ENCODE measurements at regions of chr20 and their contacts with region 1.

Region 1: DNA sequence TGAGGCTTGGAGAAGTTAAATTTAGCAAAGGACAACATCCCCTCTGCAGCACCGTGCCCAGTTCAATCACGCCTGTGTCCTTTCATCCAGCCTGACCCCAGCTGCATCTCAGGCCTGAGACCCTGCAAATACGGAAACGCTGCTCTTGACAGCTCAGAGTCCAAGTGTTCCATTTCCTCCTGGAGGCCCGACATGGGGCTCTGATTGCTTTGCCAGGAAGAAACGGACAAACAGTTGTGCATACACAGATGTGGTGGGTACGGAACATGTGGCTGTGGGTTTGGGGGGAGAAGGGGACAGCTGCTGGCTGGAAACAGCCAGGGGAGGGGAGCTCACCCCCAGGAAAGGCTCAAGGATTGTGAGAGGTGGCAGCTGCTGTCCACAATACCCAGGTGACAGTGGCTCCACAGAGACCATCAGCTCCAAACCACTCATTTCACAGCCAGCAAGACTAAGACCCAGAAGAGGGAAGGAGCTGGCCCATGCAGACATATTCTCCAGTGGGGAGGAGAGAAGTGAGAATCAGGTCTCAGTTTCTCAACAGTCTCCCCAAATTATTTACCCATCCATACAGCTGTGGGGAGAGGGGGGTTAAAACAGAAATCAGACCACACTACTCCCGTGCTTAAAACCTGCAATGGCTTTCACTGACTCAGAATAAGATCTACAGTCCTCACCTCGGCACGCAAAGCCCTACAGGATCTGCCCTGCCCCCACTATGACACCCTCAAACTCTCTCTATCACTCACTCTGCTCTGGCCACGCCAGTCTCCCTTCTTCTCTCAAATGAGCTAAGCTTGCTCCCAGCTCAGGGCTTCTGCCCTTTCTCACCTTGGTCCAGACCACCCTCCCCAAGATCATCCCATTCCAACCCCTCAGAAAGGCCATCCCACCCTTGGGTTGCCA is 89.1 kb downstream of the PREX1 start:
- DNase-seq: peak; percentile 63 to 64
- ATAC-seq: peak; percentile 81 to 86 (median 85)
- H3K4me3 ChIP-seq: no peak overlapping the region
- H3K4me3 Mint-ChIP-seq: peak overlapping the region; percentile 83
- H3K27ac ChIP-seq: peak overlapping the region; percentile 13
- H3K27ac Mint-ChIP-seq: peak overlapping the region; percentile 89 to 91
- H3K4me1 ChIP-seq: peaks cover 61% of the 10 kb centered on the region
- H3K4me1 Mint-ChIP-seq: peaks cover 69 to 73% of the 10 kb centered on the region in 2 donors
- H3K27me3 ChIP-seq: no peaks in the 10 kb centered on the region
- H3K27me3 Mint-ChIP-seq: no peaks in the 10 kb centered on the region
- CTCF ChIP-seq: no peak

Region 2: GRCh38 chr20:48760403-48760983 is 21.8 kb after region 1 on chr20:
- intact Hi-C with region 1: loop called (anchors 2 kb)
- DNase-seq: peak; percentile 65 to 89
- ATAC-seq: peak; percentile 61 to 83 (median 74)
- H3K4me3 ChIP-seq: peak overlapping the region; percentile 17
- H3K4me3 Mint-ChIP-seq: peak overlapping the region; percentile 86
- H3K27ac ChIP-seq: peak overlapping the region; percentile 87
- H3K27ac Mint-ChIP-seq: no peak overlapping the region
- H3K4me1 ChIP-seq: peaks cover 95% of the 10 kb centered on the region
- H3K4me1 Mint-ChIP-seq: peaks cover 97 to 100% of the 10 kb centered on the region in 2 donors
- H3K27me3 ChIP-seq: no peaks in the 10 kb centered on the region
- H3K27me3 Mint-ChIP-seq: no peaks in the 10 kb centered on the region
- CTCF ChIP-seq: no peak

Region 3: GRCh38 chr20:48769069-48769879 is 30.6 kb after region 1 on chr20:
- intact Hi-C with region 1: loop called (anchors 1 kb)
- DNase-seq: peak; percentile 84 to 94
- ATAC-seq: peak; percentile 80 to 93 (median 88)
- H3K4me3 ChIP-seq: no peak overlapping the region
- H3K4me3 Mint-ChIP-seq: peak overlapping the region; percentile 55
- H3K27ac ChIP-seq: peak overlapping the region; percentile 86
- H3K27ac Mint-ChIP-seq: no peak overlapping the region
- H3K4me1 ChIP-seq: peaks cover 97% of the 10 kb centered on the region
- H3K4me1 Mint-ChIP-seq: peaks cover 92 to 93% of the 10 kb centered on the region in 2 donors
- H3K27me3 ChIP-seq: no peaks in the 10 kb centered on the region
- H3K27me3 Mint-ChIP-seq: no peaks in the 10 kb centered on the region
- CTCF ChIP-seq: no peak